ENCODE measurements at regions of chr14 and their contacts with region 1.

Region 1: GRCh38 chr14:36553656-36554260 is 28.7 kb downstream of the NKX2-8 start:
- DNase-seq: no peak
- ATAC-seq: no peak
- H3K4me3 Mint-ChIP-seq: no peak overlapping the region
- H3K27ac Mint-ChIP-seq: no peak overlapping the region
- H3K4me1 Mint-ChIP-seq: no peaks in the 10 kb centered on the region
- H3K27me3 Mint-ChIP-seq: peaks cover 2% of the 10 kb centered on the region
- CTCF ChIP-seq: no peak

Region 2: DNA sequence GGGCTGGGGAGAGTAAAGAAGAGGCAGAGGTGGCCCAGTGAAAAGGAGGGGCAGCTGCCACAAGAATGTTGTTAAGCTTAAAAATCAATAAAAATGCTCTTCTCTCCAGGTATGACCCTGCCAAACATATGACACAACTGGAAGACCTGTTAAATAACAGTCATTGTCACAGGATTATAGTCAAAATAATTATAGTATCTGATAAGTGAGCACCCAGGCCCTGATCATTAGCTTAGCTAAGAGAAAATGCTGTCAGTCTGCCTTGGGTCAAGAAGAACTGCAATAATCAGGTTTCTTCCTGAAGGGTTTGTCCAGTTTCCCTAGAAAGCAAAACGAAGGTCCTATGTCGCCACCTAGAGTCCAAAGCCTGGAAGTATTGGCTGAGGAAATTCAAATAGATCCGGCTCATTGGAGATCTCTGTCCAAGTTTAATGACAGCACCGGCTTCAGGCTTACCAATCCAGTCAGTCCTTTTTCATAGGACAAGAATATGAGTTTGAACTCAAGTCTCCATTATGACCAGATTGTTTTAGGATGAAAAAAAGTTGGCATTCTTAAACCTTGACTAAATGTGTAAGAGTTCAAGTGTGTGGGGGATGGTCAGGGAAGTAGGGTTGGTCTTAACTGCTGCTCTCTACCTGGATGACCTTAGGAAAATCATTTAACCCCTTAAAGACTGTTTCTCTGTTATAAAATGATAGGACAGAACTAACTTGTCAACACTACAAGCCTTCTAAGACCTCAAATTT is 51.2 kb after region 1 on chr14:
- CTCF ChIA-PET with region 1: interaction called, 7 read pairs
- POLR2A ChIA-PET with region 1: no interaction called
- intact Hi-C with region 1: loop called (anchors 1 kb)
- DNase-seq: no peak
- ATAC-seq: no peak
- H3K4me3 Mint-ChIP-seq: no peak overlapping the region
- H3K27ac Mint-ChIP-seq: no peak overlapping the region
- H3K4me1 Mint-ChIP-seq: no peaks in the 10 kb centered on the region
- H3K27me3 Mint-ChIP-seq: peaks cover 13% of the 10 kb centered on the region
- CTCF ChIP-seq: no peak

Region 3: DNA sequence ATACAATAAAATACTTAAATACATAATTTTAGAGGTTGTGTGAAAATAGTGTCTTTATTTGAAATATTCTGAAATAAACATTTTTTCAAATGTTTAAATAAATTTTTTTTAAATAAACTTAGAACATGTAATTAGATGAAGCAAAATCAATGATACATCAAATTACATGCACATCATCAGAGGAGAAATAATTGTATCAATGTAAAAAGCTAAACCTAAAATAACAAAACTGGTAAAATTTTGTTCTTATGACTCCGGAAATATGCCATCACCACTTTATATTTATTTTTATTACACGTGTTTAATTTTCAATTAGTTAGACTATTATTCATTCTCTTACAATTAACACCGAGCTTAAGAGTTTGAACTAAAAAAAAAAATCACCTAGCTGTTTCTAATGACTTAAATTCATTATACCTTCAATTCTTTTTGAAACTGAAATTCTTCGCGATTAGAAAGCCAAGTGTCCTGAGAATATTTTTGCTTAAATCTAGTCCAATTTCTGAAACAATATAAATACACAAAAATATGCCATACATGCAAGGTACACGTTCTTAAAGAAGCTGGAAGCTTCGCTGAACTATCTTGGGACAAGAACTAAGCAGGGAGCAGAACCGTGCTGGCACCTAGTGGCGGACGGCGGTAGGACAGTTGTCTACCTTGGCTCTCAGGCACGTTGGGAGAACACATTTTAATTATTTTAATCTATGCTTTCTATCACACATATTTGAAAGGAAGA is 388.2 kb after region 1 on chr14:
- CTCF ChIA-PET with region 1: interaction called, 16 read pairs
- POLR2A ChIA-PET with region 1: no interaction called
- intact Hi-C with region 1: loop called (anchors 2 kb)
- DNase-seq: no peak
- ATAC-seq: peak; percentile 64
- H3K4me3 Mint-ChIP-seq: no peak overlapping the region
- H3K27ac Mint-ChIP-seq: no peak overlapping the region
- H3K4me1 Mint-ChIP-seq: no peaks in the 10 kb centered on the region
- H3K27me3 Mint-ChIP-seq: no peaks in the 10 kb centered on the region
- CTCF ChIP-seq: peak; percentile 95

Measured in activated B cell treated with CpG ODN at 0.5 μM for 24 hours (primary cell).